GM12878 (cell line): ENCODE measurements at regions of chr1 and their contacts with region 1.

Region 1: DNA sequence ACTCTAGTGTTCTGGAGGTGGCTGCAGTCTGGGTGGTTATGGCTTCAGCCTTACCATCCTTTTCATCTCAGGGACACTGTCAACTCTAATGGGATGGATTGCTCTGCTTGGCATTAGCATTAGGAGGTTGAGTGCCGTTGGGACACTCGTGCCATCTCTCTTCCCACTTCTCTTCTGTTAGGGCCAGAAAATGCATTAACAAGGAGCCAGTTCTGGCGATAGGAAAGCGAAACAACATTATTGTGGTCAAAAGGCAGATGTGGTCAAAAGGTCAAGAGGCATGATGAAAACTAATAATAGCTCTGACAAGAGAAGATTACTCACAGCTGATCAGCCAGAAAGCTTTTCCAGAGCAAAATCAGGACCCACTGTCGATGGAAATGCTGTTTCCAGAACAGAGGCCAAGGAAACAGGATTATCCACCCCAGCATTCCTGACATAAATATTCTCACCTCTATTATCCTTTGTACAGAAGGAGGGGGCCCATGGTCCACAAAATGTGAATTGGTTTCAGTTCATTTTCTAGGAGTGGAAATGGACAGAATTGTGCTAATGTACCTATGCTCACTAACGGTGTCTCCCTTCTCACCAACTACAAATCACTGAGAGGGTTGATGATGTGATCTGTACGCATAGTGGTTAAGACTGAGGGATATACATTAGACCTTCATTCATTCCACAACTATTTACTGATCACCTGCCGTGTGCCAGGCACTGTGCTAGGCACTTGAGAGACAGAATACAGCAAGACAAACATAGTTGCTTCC is 72.0 kb downstream of the ST6GALNAC5 start:
- DNase-seq: no peak
- ATAC-seq: peak; percentile 65
- H3K4me3 ChIP-seq: no peak overlapping the region
- H3K27ac ChIP-seq: no peak overlapping the region
- H3K4me1 ChIP-seq: peaks cover 8% of the 10 kb centered on the region; the same call in 1 of the 2 replicates
- H3K27me3 ChIP-seq: no peaks in the 10 kb centered on the region
- CTCF ChIP-seq: no peak
- EP300 ChIP-seq: peak; percentile 24 to 54; a peak in 2 of 4 replicates
- POLR2A ChIP-seq: no peak
- RAD21 ChIP-seq: no peak

Region 2: GRCh38 chr1:76868154-76868882 is 70.9 kb before region 1 on chr1:
- CTCF ChIA-PET with region 1: interaction called, 7 read pairs
- POLR2A ChIA-PET with region 1: interaction called, 4 read pairs
- RAD21 ChIA-PET with region 1: interaction called, 41 read pairs
- SMC1A ChIA-PET with region 1: interaction called, 22 read pairs
- in situ Hi-C with region 1: no loop called
- intact Hi-C with region 1: no loop called
- DNase-seq: no peak
- ATAC-seq: peak; percentile 82
- H3K4me3 ChIP-seq: no peak overlapping the region
- H3K27ac ChIP-seq: no peak overlapping the region
- H3K4me1 ChIP-seq: peaks cover 11% of the 10 kb centered on the region; the same call in 1 of the 2 replicates
- H3K27me3 ChIP-seq: peaks cover 8 to 22% of the 10 kb centered on the region in 2 experiments
- CTCF ChIP-seq: peak in 2 of 3 experiments; percentile 3 to 14; a peak in 1 of 6 replicates
- EP300 ChIP-seq: no peak
- POLR2A ChIP-seq: no peak
- RAD21 ChIP-seq: 0 out of 2 replicates have a peak, but pooled peaks have one; percentile 15

Region 3: DNA sequence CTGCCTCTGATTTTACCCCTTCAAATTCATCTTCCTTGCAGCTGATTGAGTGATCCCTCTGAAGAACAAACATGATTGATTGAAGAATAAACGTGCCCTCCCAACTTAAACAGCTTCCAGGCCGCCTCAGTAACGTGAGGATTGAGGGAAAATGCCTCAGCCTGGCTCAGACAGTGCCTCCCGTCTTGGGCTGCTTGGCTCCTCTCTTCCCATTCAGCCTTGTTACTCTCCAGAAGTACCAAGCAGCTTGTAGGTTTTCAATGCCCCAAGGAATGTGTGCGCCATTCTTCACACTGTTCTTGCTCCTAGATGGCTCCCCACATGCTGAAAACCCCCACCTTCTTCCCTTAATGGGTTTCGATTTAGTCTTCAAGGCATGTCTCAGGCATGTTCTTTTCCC is 20.1 kb before region 1 on chr1:
- CTCF ChIA-PET with region 1: interaction called, 6 read pairs
- POLR2A ChIA-PET with region 1: interaction called, 5 read pairs
- RAD21 ChIA-PET with region 1: interaction called, 46 read pairs
- SMC1A ChIA-PET with region 1: interaction called, 75 read pairs
- in situ Hi-C with region 1: no loop called
- intact Hi-C with region 1: no loop called
- DNase-seq: no peak
- ATAC-seq: peak; percentile 10; the same call in 1 of the 3 replicates
- H3K4me3 ChIP-seq: no peak overlapping the region
- H3K27ac ChIP-seq: no peak overlapping the region
- H3K4me1 ChIP-seq: no peaks in the 10 kb centered on the region
- H3K27me3 ChIP-seq: no peaks in the 10 kb centered on the region
- CTCF ChIP-seq: no peak
- EP300 ChIP-seq: no peak
- POLR2A ChIP-seq: no peak
- RAD21 ChIP-seq: no peak

Region 4: GRCh38 chr1:76949503-76949902 is 10.3 kb after region 1 on chr1:
- CTCF ChIA-PET with region 1: interaction called, 47 read pairs
- POLR2A ChIA-PET with region 1: interaction called, 54 read pairs
- RAD21 ChIA-PET with region 1: interaction called, 117 read pairs
- SMC1A ChIA-PET with region 1: interaction called, 215 read pairs
- in situ Hi-C with region 1: no loop called
- intact Hi-C with region 1: no loop called
- DNase-seq: no peak
- ATAC-seq: peak; percentile 38
- H3K4me3 ChIP-seq: no peak overlapping the region
- H3K27ac ChIP-seq: no peak overlapping the region
- H3K4me1 ChIP-seq: no peaks in the 10 kb centered on the region
- H3K27me3 ChIP-seq: 0 out of 4 replicates have a peak, but pooled peaks cover 0 to 1% of the 10 kb centered on the region in 2 experiments
- CTCF ChIP-seq: no peak
- EP300 ChIP-seq: no peak
- POLR2A ChIP-seq: no peak
- RAD21 ChIP-seq: no peak

Region 5: DNA sequence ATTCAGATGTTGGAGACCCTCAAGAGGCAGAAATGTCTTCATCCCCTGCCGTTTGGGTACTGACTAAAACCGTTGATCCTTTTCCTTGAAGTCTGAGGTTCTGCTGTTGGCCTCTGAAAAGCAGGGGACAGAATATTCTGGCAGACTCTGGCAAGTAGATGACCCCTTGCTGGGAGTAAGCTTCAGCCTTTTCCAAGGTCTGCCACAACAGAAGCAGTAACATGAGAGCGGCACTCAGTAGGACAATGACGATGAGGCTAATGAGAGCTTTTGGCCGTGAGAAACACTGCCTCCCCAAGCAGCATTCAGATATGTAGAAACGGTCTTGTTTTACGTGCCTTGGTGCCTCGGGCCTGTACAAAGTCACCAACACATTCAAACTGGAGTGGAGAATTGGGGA is 71.7 kb after region 1 on chr1:
- CTCF ChIA-PET with region 1: interaction called, 5 read pairs
- POLR2A ChIA-PET with region 1: interaction called, 3 read pairs
- RAD21 ChIA-PET with region 1: interaction called, 18 read pairs
- SMC1A ChIA-PET with region 1: interaction called, 13 read pairs
- in situ Hi-C with region 1: no loop called
- intact Hi-C with region 1: no loop called
- DNase-seq: no peak
- ATAC-seq: no peak
- H3K4me3 ChIP-seq: no peak overlapping the region
- H3K27ac ChIP-seq: no peak overlapping the region
- H3K4me1 ChIP-seq: no peaks in the 10 kb centered on the region
- H3K27me3 ChIP-seq: no peaks in the 10 kb centered on the region
- CTCF ChIP-seq: no peak
- EP300 ChIP-seq: no peak
- POLR2A ChIP-seq: no peak
- RAD21 ChIP-seq: no peak

Region 6: GRCh38 chr1:77120950-77121349 is 181.7 kb after region 1 on chr1:
- CTCF ChIA-PET with region 1: interaction called, 7 read pairs
- POLR2A ChIA-PET with region 1: no interaction called
- RAD21 ChIA-PET with region 1: interaction called, 6 read pairs
- SMC1A ChIA-PET with region 1: interaction called, 29 read pairs
- in situ Hi-C with region 1: no loop called
- intact Hi-C with region 1: no loop called
- DNase-seq: no peak
- ATAC-seq: no peak
- H3K4me3 ChIP-seq: no peak overlapping the region
- H3K27ac ChIP-seq: no peak overlapping the region
- H3K4me1 ChIP-seq: no peaks in the 10 kb centered on the region
- H3K27me3 ChIP-seq: no peaks in the 10 kb centered on the region
- CTCF ChIP-seq: no peak
- EP300 ChIP-seq: no peak
- POLR2A ChIP-seq: no peak
- RAD21 ChIP-seq: no peak